ENCODE measurements at regions of chr11 and their contacts with region 1.

Region 1: GRCh38 chr11:107526197-107526596 is 39.3 kb downstream of the ALKBH8 start:
- DNase-seq: no peak
- ATAC-seq: no peak
- H3K4me3 ChIP-seq: no peak overlapping the region
- H3K27ac ChIP-seq: no peak overlapping the region
- H3K4me1 ChIP-seq: no peaks in the 10 kb centered on the region
- H3K27me3 ChIP-seq: no peaks in the 10 kb centered on the region
- CTCF ChIP-seq: no peak

Region 2: DNA sequence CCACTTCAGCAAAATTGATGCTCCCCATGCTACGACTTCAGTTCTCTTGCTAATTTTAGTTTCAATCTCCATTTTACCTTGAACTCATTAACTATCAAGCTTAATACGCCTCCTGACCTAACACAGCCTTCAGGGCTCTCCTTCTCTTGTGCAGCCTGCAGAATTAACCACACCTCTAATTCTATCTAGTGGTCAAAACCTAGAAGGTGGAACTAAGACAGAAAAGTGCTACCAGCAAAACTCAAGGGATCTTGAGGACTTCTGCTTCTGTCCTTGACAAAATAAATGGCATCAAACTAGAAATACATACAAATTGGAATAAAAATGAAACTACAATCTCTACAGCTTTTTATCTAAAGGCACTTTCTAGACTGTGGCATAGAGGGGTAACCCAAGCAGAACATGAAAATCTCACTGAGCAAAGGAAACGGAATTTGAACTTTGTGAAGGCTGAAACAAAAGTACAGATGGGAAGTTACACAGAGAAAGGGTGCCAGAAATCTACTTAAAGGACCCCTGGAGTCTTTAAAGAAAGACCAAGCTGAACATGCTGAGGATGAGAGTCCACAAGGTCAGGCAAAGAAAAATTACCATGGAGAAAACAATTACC is 79.3 kb before region 1 on chr11:
- CTCF ChIA-PET with region 1: no interaction called
- POLR2A ChIA-PET with region 1: interaction called, 15 read pairs
- in situ Hi-C with region 1: no loop called
- intact Hi-C with region 1: no loop called
- DNase-seq: no peak
- ATAC-seq: no peak
- H3K4me3 ChIP-seq: no peak overlapping the region
- H3K27ac ChIP-seq: no peak overlapping the region
- H3K4me1 ChIP-seq: no peaks in the 10 kb centered on the region
- H3K27me3 ChIP-seq: no peaks in the 10 kb centered on the region
- CTCF ChIP-seq: no peak

Region 3: GRCh38 chr11:107719557-107720302 is 193.5 kb after region 1 on chr11:
- CTCF ChIA-PET with region 1: no interaction called
- POLR2A ChIA-PET with region 1: no interaction called
- in situ Hi-C with region 1: no loop called
- intact Hi-C with region 1: no loop called
- DNase-seq: no peak
- ATAC-seq: no peak; the same call in 1 of the 2 replicates
- H3K4me3 ChIP-seq: no peak overlapping the region
- H3K27ac ChIP-seq: no peak overlapping the region
- H3K4me1 ChIP-seq: no peaks in the 10 kb centered on the region
- H3K27me3 ChIP-seq: peaks cover 6% of the 10 kb centered on the region; the same call in 1 of the 2 replicates
- CTCF ChIP-seq: no peak